HEK293 (cell line): ENCODE measurements at regions of chr11 and their contacts with region 1.

Region 1: GRCh38 chr11:124586238-124586860 is 16.6 kb downstream of the OR8A1 start:
- H3K4me3 ChIP-seq: no peak overlapping the region
- H3K27ac ChIP-seq: no peak overlapping the region
- H3K4me1 ChIP-seq: no peaks in the 10 kb centered on the region
- CTCF ChIP-seq: no peak

Region 2: GRCh38 chr11:124415356-124415923 is 170.9 kb before region 1 on chr11:
- CTCF ChIA-PET with region 1: interaction called, 14 read pairs
- POLR2A ChIA-PET with region 1: no interaction called
- H3K4me3 ChIP-seq: no peak overlapping the region
- H3K27ac ChIP-seq: no peak overlapping the region
- H3K4me1 ChIP-seq: no peaks in the 10 kb centered on the region
- CTCF ChIP-seq: no peak